A549 (cell line): ENCODE measurements at regions of chr17 and their contacts with region 1.

Region 1: DNA sequence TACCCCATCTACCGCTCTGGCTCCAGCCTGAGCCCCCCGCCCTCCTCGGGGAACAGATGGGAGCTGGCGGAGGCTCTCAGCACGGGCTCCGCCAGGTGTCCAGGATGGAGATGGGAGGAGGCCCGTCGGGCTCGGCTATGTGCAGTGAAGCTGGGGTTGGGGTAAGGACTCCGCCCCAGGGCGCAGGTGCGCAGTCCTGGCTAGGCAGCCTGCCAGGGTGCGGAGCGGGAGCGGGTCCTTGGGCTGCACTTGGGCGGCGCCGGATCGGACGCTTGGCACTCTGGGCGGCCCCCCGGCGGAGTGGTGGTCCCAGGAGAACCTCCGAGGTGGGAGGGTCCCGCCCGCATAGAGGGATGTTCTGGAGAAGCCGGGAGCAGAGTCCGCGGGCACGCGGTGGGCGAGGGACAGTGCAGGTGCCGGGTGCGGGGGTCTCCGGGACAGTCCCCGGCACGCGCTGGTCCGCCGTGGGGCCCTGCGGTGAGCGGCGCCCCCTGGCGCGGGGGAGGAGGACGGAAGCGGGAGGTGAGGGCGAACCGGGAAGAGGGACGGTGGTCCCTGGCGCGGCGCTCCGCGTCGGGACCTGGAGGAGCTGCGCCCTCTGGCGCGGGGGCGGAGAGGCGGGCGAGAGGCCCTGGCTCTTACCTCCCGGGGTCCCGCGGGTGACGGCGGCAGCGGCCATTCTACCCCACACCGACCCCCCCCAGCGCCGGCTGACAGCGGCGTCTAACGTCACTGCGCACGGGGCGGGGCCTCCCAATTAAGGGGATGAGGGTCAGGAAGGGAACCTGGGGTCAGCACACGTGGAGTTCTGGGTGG is at the start of gene CAMTA2:
- DNase-seq: peak; percentile 87 to 90
- ATAC-seq: peak; percentile 89
- H3K4me3 ChIP-seq: peak within 1 kb of the TSS; percentile 78
- H3K27ac ChIP-seq: peak within 1 kb of the TSS; percentile 88 to 91
- H3K4me1 ChIP-seq: peaks cover 21% of the 10 kb centered on the region
- CTCF ChIP-seq: peak; percentile 98
- EP300 ChIP-seq: no peak
- POLR2A ChIP-seq: peak; percentile 54
- RAD21 ChIP-seq: peak; percentile 44 to 75; a peak in 4 of 5 replicates
- polyA plus RNA-seq, gene CAMTA2: 12.4 and 17.7 TPM in 2 replicates

Region 2: GRCh38 chr17:4908301-4908700 is 78.9 kb before region 1 on chr17:
- CTCF ChIA-PET with region 1: interaction called, 40 read pairs
- POLR2A ChIA-PET with region 1: no interaction called
- DNase-seq: no peak
- ATAC-seq: no peak
- H3K4me3 ChIP-seq: no peak overlapping the region
- H3K27ac ChIP-seq: no peak overlapping the region
- H3K4me1 ChIP-seq: peaks cover 9% of the 10 kb centered on the region; the same call in 1 of the 3 replicates
- CTCF ChIP-seq: no peak
- EP300 ChIP-seq: no peak
- POLR2A ChIP-seq: no peak
- RAD21 ChIP-seq: no peak

Region 3: DNA sequence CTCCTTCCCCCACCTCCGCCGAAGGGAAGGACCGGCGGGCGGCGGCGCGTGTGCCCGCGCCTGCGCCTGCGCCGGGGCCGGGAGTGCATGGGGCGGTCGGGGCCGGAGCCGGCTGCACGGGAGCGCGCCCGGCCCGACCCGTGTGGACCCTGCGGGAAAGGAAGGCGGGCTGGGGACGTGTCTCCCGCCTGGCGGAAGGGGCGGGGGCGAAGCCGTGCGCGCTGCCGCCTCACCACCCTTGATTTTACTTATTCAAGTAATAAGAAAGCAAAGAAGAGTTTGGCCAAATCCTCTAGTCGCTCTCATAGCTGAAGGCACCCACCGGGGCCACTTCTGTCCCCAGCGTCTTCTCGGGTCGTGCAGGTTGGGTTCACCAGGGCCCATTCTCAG is 38.2 kb before region 1 on chr17:
- CTCF ChIA-PET with region 1: interaction called, 28 read pairs
- POLR2A ChIA-PET with region 1: interaction called, 3 read pairs
- DNase-seq: peak; percentile 95 to 98
- ATAC-seq: peak; percentile 47 to 69
- H3K4me3 ChIP-seq: peak overlapping the region; percentile 98
- H3K27ac ChIP-seq: peak overlapping the region; percentile 99
- H3K4me1 ChIP-seq: peaks cover 54% of the 10 kb centered on the region
- CTCF ChIP-seq: no peak
- EP300 ChIP-seq: no peak
- POLR2A ChIP-seq: peak; percentile 64
- RAD21 ChIP-seq: no peak

Region 4: GRCh38 chr17:4966844-4967538 is 20.2 kb before region 1 on chr17:
- CTCF ChIA-PET with region 1: interaction called, 148 read pairs
- POLR2A ChIA-PET with region 1: interaction called, 17 read pairs
- DNase-seq: peak; percentile 100
- ATAC-seq: peak; percentile 89 to 95
- H3K4me3 ChIP-seq: peak overlapping the region; percentile 63
- H3K27ac ChIP-seq: peak overlapping the region; percentile 94 to 95
- H3K4me1 ChIP-seq: peaks cover 21% of the 10 kb centered on the region
- CTCF ChIP-seq: no peak
- EP300 ChIP-seq: no peak
- POLR2A ChIP-seq: peak; percentile 59; the same call in 1 of the 2 replicates
- RAD21 ChIP-seq: peak in 1 of 2 experiments; percentile 10; a peak in 1 of 5 replicates

Region 5: GRCh38 chr17:5011928-5012327 is 24.8 kb after region 1 on chr17:
- CTCF ChIA-PET with region 1: interaction called, 13 read pairs
- POLR2A ChIA-PET with region 1: no interaction called
- DNase-seq: no peak
- ATAC-seq: no peak
- H3K4me3 ChIP-seq: no peak overlapping the region
- H3K27ac ChIP-seq: no peak overlapping the region
- H3K4me1 ChIP-seq: no peaks in the 10 kb centered on the region
- CTCF ChIP-seq: no peak
- EP300 ChIP-seq: no peak
- POLR2A ChIP-seq: no peak
- RAD21 ChIP-seq: no peak

Region 6: DNA sequence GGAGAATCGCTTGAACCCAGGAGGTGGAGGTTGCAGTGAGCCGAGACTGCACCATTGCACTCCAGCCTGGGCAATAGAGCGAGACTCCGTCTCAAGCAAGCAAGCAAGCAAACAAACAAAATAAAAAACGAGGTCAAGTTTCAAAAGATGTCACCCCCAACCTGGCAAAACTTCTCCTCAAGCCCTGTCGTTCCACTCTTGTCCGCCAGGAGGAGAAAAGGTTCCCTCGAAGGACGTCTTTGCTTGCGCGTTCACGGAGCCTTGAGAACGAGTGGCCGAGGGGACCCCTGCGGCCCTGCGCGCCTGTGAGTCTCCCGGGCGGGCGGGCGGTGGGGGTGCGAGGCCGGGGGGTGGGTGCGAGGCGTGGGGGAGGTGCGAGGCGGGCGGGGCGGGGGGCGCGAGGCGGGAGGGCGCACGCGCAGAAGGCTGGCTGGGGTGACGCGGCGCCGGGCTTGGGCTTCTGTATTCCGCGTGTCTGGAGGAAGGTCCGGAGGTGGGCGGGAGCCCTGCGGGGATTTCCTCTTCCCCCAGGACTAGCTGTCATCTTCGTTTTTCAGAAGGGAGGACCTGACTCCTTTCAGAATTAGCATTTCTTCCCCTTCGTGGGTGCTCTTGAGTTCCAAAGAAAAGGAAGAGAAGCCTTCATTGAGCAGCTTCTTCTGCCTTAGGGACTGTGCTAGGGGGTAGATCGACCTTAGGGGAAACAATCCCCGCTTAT is 44.4 kb after region 1 on chr17:
- CTCF ChIA-PET with region 1: interaction called, 11 read pairs
- POLR2A ChIA-PET with region 1: no interaction called
- DNase-seq: peak; percentile 86
- ATAC-seq: peak; percentile 76 to 79
- H3K4me3 ChIP-seq: peak overlapping the region; percentile 42
- H3K27ac ChIP-seq: peak overlapping the region; percentile 70 to 90
- H3K4me1 ChIP-seq: peaks cover 3% of the 10 kb centered on the region; the same call in 1 of the 3 replicates
- CTCF ChIP-seq: peak; percentile 65
- EP300 ChIP-seq: no peak
- POLR2A ChIP-seq: 0 out of 2 replicates have a peak, but pooled peaks have one; percentile 10
- RAD21 ChIP-seq: peak; percentile 47 to 55; a peak in 4 of 5 replicates

Region 7: GRCh38 chr17:5179003-5179402 is 191.8 kb after region 1 on chr17:
- CTCF ChIA-PET with region 1: no interaction called
- POLR2A ChIA-PET with region 1: no interaction called
- DNase-seq: no peak
- ATAC-seq: no peak
- H3K4me3 ChIP-seq: no peak overlapping the region
- H3K27ac ChIP-seq: no peak overlapping the region
- H3K4me1 ChIP-seq: no peaks in the 10 kb centered on the region
- CTCF ChIP-seq: no peak
- EP300 ChIP-seq: no peak
- POLR2A ChIP-seq: no peak
- RAD21 ChIP-seq: no peak